H1 (cell line): ENCODE measurements at regions of chr7 and their contacts with region 1.

Region 1: DNA sequence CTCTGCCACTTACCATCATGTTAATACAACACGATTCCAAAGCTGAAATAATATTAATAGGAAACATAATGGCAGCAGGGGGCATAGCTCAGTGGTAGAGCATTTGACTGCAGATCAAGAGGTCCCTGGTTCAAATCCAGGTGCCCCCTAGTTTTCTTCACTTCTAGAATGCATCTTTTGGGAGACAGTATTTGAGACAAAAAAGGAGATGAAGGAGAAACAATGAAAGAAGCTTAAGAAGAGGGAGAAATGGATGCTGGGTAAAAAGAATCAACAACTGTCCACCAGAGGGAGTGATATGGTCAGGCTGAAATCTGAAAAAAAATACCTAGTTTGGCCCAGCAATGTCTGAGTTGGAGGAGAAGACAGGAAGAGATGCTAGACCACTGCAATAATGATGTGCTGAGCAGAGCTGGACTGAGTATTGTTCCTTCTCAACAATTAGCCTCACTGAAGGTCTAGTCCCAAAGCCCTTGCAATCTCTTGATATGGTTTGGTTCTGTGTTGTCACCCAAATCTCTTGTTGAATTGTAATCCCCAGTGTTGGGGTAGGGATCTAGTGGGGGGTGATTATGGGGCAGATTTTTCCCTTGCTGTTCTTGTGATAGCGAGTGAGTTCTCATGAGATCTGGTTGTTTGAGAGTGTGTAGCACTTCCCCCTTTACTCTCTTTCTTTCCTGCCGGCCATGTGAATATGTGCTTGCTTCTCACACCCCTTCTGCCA is 48.3 kb downstream of the ZNF783 start:
- DNase-seq: no peak
- H3K4me3 ChIP-seq: no peak overlapping the region
- H3K27ac ChIP-seq: no peak overlapping the region
- H3K4me1 ChIP-seq: no peaks in the 10 kb centered on the region
- H3K27me3 ChIP-seq: no peaks in the 10 kb centered on the region
- CTCF ChIP-seq: peak in 2 of 3 experiments; percentile 51 to 68; a peak in 2 of 4 replicates
- EP300 ChIP-seq: no peak
- POLR2A ChIP-seq: no peak
- RAD21 ChIP-seq: peak; percentile 63 to 66

Region 2: GRCh38 chr7:149261829-149262617 is 48.3 kb before region 1 on chr7 and contains the start of gene ZNF783:
- CTCF ChIA-PET with region 1: interaction called, 10 read pairs
- POLR2A ChIA-PET with region 1: interaction called, 3 read pairs
- DNase-seq: peak; percentile 50 to 88
- H3K4me3 ChIP-seq: peak within 1 kb of the TSS; percentile 47 to 73 (median 50)
- H3K27ac ChIP-seq: peak within 1 kb of the TSS; percentile 81; the same call in 1 of the 2 replicates
- H3K4me1 ChIP-seq: peaks cover 0 to 3% (median 0%) of the 10 kb centered on the region in 4 experiments; a peak in 1 of 7 replicates
- H3K27me3 ChIP-seq: peaks cover 0 to 2% (median 1%) of the 10 kb centered on the region in 4 experiments; a peak in 1 of 7 replicates
- CTCF ChIP-seq: peak; percentile 72 to 94 (median 73)
- EP300 ChIP-seq: no peak
- POLR2A ChIP-seq: peak; percentile 46 to 75
- RAD21 ChIP-seq: peak; percentile 50 to 73
- total RNA-seq, gene ZNF783: 7.3 and 8.3 TPM in 2 replicates

Region 3: DNA sequence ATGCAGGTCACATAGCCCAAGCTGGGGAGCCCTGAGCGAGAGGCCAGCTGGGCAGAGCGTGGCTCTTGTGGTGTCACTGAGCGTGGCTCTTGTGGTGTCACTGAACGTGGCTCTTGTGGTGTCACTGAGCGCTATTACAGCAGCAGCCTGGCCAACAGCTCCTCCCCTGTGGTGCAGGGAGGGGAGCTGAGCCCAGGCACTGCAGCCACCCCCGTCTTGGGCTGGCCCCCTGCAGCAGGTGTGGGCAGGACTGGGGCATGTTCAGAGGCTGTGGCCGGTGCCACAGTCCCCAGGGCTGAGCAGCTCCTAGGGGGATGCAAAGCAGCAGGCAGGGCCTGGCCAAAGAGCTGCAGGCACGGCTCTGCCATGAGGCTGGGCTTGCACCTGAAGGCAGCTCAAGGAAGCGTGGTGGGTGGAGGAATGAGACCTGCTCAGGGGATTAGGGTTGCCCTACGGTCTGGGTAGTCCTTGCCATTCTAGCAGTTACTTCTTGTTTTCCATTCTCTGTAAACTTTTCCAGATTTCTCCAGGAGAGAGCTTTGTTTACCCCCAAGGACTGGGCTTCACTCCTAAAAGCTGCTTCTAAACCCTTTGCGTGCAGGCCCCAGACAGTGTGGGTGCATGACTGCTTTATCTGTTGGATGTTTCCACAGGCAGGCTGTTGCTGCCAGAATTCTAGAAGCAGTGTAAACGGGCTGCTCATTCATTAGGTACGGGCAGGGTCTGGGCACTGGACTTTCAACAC is 19.1 kb before region 1 on chr7:
- CTCF ChIA-PET with region 1: interaction called, 17 read pairs
- POLR2A ChIA-PET with region 1: interaction called, 3 read pairs
- DNase-seq: no peak
- H3K4me3 ChIP-seq: no peak overlapping the region
- H3K27ac ChIP-seq: no peak overlapping the region
- H3K4me1 ChIP-seq: peaks cover 0 to 3% (median 0%) of the 10 kb centered on the region in 4 experiments; a peak in 1 of 7 replicates
- H3K27me3 ChIP-seq: no peaks in the 10 kb centered on the region
- CTCF ChIP-seq: no peak
- EP300 ChIP-seq: no peak
- POLR2A ChIP-seq: no peak
- RAD21 ChIP-seq: no peak

Region 4: DNA sequence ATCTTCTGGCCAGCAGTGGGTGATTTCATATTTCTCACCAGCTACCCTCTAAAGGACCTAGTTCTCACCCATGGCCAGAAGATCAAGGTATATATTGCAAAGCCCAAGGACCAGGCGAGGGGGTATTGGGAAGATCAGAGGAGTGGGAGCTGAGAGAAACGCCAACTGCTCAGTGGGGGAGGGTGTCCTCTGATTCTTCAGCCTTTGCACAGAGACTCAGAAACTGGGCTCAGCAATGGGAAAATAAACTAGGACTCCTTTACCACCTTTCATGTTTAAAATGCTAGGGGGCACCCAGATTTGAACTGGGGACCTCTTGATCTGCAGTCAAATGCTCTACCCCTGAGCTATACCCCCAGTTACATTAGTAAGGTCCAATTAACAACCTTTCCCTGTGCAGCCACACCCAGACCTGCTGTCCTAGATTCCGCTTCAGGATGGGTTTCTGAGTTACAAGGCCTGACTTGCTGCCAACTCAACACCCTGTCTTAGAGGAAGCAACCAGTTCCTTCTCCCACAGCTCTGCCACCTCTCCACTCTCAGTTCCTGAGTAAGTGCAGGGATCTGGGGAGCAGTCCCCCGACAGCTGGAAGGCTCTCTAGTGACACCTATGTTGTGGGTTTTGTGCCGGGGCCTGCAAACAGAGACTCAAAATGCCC is 45.2 kb after region 1 on chr7:
- CTCF ChIA-PET with region 1: interaction called, 20 read pairs
- POLR2A ChIA-PET with region 1: interaction called, 4 read pairs
- DNase-seq: peak; percentile 81 to 87
- H3K4me3 ChIP-seq: peak overlapping the region; percentile 17 to 58 (median 42); a peak in 7 of 8 replicates
- H3K27ac ChIP-seq: no peak overlapping the region; the same call in 1 of the 2 replicates
- H3K4me1 ChIP-seq: peaks cover 0 to 3% (median 0%) of the 10 kb centered on the region in 4 experiments; a peak in 3 of 7 replicates
- H3K27me3 ChIP-seq: no peaks in the 10 kb centered on the region
- CTCF ChIP-seq: peak; percentile 37 to 56 (median 50)
- EP300 ChIP-seq: no peak
- POLR2A ChIP-seq: no peak
- RAD21 ChIP-seq: peak; percentile 39 to 58; a peak in 3 of 4 replicates